Vagina (tissue), 2 donors: ENCODE measurements at regions of chr6 and their contacts with region 1.

Region 1: DNA sequence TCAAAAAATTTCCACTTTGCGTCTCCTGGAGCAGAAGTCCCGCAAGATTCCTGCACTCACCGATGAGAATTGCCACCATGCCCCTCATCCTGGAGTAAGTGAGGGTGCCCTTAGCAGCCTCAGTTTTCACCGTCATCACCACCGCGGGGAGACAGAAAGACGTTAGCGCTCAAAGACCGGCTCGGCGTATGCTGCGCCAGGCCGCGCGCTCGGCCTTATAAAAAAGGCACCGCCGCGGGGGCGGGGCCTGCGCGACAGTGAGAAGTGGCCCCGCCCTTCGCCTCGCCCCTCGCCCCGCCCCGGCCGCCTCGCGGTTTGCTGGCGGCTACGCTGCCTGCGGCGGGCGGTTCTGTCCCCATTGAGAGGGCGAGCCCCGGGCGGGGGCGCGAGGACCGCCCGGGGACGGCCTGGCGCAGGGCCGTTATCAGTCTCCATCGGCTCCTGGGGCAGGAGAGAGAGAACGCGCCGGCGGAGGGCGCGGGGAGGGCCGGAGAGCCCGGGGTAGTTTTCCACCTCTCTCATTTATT is 122.3 kb upstream of the SLC2A12 start:
- DNase-seq: peak in 1 of 2 donors; percentile 95
- H3K4me3 ChIP-seq: peak overlapping the region; percentile 89 to 95
- H3K27ac ChIP-seq: peak overlapping the region; percentile 98
- H3K4me1 ChIP-seq: peaks cover 57% of the 10 kb centered on the region
- H3K27me3 ChIP-seq: no peaks in the 10 kb centered on the region
- CTCF ChIP-seq: no peak
- POLR2A ChIP-seq: peak; percentile 35 to 90

Region 2: DNA sequence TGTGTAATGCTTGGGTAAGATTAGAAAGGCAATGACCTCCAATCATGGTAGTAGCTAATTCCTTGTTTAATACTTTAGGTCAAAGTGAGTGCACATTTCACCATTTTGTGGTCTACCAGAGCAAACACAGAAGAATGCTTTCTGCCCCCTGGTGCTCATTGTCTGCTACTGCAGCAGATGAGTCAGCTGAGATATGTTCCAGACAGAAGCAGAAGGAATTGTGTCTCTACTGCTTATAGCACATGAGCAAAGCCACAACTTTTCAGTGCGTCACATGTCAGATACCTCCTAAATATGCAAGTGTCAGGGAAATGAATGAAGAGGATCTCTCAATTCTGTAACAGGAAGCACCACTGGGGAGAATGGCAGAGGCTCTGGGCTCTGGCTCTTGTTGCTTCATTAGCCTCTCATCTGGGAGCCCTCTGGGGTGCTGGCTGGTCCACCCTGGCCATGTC is 466.3 kb after region 1 on chr6:
- intact Hi-C with region 1: loop called (anchors 5 kb)
- DNase-seq: no peak
- H3K4me3 ChIP-seq: no peak overlapping the region
- H3K27ac ChIP-seq: peak overlapping the region; percentile 17
- H3K4me1 ChIP-seq: peaks cover 34% of the 10 kb centered on the region
- H3K27me3 ChIP-seq: no peaks in the 10 kb centered on the region
- CTCF ChIP-seq: peak; percentile 67 to 95 (median 74)
- POLR2A ChIP-seq: no peak

Region 3: DNA sequence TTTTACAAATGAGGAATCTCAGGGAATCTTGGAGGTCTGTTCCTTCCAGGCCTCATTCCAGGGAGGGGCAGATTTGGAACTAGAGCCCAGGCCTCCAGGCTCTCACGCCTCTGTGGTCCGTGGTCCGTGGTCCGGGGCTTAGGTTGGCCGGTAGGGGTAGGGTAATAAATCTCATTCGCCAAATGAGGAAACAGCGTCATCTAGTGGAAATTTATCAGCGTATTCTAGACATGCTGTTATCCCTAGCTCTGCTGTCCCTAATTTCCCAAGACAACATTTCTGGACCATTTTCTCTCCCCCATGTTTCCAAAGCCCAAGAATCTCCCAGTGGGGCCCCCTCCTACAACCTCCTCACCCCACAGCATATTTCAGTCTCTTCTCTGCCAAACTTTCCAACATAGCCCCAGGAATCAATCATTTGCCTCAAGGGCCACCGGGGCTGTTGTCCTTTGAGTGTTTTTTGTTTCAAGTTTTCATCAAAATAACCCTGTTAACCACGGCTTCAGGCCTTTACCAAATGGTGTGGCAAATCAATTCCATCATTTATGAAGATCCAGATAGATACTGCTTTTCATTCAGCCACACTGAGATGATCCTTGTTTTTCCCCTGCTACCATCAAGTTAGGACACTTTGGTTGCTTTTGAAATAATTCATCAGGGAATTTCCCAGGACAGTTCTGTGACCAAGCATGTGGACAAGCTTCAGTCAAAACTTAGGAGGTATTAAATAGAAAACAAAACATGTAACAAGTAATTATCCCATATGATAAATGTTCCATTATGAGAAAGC is 648.4 kb after region 1 on chr6:
- intact Hi-C with region 1: loop called (anchors 5 kb)
- DNase-seq: no peak
- H3K4me3 ChIP-seq: no peak overlapping the region
- H3K27ac ChIP-seq: peak overlapping the region; percentile 30
- H3K4me1 ChIP-seq: peaks cover 31% of the 10 kb centered on the region
- H3K27me3 ChIP-seq: no peaks in the 10 kb centered on the region
- CTCF ChIP-seq: peak; percentile 79 to 93 (median 81)
- POLR2A ChIP-seq: no peak

Region 4: DNA sequence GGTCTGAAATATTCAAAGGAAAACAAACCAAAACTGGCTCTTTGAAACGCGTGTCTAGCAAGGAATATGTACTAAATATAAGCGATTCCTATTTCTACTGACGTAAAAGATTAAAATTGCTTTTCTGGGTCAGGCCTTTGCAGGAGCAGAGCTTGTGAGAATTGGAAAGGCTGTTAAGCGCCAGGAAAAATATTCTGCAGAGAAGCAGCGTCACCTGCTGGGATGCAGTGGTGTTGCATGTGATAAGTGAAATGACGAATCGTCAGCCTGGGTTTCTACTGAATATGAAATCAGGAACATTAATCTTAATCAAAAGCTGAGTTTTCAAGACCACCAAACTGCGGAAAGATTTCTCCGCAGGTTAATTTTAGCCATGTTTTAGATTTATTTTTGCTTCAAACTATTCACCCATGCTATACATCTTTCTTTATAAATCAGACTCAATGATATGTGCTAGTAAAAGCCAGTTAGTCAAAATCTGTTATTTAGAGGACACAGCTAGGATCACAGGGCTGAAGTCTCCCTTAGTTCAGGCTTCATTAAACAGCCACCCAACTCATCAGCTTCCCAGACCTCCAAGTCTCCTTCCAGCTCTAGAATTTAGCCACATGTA is 707.8 kb after region 1 on chr6:
- intact Hi-C with region 1: loop called (anchors 5 kb)
- DNase-seq: no peak
- H3K4me3 ChIP-seq: no peak overlapping the region
- H3K27ac ChIP-seq: peak overlapping the region; percentile 15
- H3K4me1 ChIP-seq: no peaks in the 10 kb centered on the region
- H3K27me3 ChIP-seq: no peaks in the 10 kb centered on the region
- CTCF ChIP-seq: peak; percentile 48 to 97 (median 55)
- POLR2A ChIP-seq: no peak

Region 5: GRCh38 chr6:134903448-134903847 is 728.7 kb after region 1 on chr6:
- intact Hi-C with region 1: no loop called
- DNase-seq: no peak
- H3K4me3 ChIP-seq: no peak overlapping the region
- H3K27ac ChIP-seq: no peak overlapping the region
- H3K4me1 ChIP-seq: peaks cover 3% of the 10 kb centered on the region
- H3K27me3 ChIP-seq: no peaks in the 10 kb centered on the region
- CTCF ChIP-seq: no peak
- POLR2A ChIP-seq: no peak